ENCODE measurements at regions of chr12 and their contacts with region 1.

Region 1: DNA sequence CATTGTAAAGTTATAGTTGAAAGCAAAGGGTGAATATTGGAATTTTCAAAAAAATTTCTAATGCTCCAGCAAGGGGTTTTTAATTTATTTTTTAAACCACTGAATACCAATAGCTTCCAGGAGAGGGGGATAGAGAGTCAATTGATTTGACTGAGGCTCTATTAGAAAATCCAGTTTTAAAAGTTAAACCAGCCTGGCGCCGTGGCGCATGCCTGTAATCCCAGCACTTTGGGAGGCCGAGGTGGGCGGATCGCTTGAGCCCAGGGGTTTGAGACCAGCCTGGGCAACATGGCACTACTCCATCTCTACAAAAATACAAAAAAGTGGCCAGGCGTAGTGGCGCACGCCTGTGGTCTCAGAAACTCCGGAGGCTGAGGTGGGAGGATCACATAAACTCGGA is 150.1 kb downstream of the SLC38A4 start:
- DNase-seq: peak in 1 of 5 donors; percentile 23
- ATAC-seq: no peak
- H3K4me3 ChIP-seq: peak overlapping the region in 1 of 12 donors; percentile 23
- H3K27ac ChIP-seq: no peak overlapping the region
- H3K4me1 ChIP-seq: peaks cover 0 to 8% (median 0%) of the 10 kb centered on the region in 12 donors
- H3K27me3 ChIP-seq: no peaks in the 10 kb centered on the region
- CTCF ChIP-seq: peak; percentile 58 to 78 (median 68)
- POLR2A ChIP-seq: no peak

Region 2: GRCh38 chr12:46124848-46125619 is 550.7 kb before region 1 on chr12:
- intact Hi-C with region 1: loop called in 2 of 10 experiments (anchors 5 to 10 kb)
- DNase-seq: peak in 3 of 5 donors; percentile 35 to 44 (median 36)
- ATAC-seq: peak; percentile 85 to 92 (median 91)
- H3K4me3 ChIP-seq: peak overlapping the region in 3 of 12 donors; percentile 22 to 38 (median 25)
- H3K27ac ChIP-seq: peak overlapping the region in 1 of 12 donors; percentile 27
- H3K4me1 ChIP-seq: peaks cover 0 to 14% (median 2%) of the 10 kb centered on the region in 12 donors
- H3K27me3 ChIP-seq: peaks cover 0 to 5% (median 0%) of the 10 kb centered on the region in 9 donors
- CTCF ChIP-seq: peak; percentile 23 to 77 (median 60)
- POLR2A ChIP-seq: no peak

Region 3: GRCh38 chr12:46153268-46153872 is 522.4 kb before region 1 on chr12:
- intact Hi-C with region 1: loop called in 2 of 10 experiments (anchors 10 kb)
- DNase-seq: no peak
- ATAC-seq: no peak
- H3K4me3 ChIP-seq: no peak overlapping the region
- H3K27ac ChIP-seq: no peak overlapping the region
- H3K4me1 ChIP-seq: peaks cover 0 to 11% (median 0%) of the 10 kb centered on the region in 12 donors
- H3K27me3 ChIP-seq: no peaks in the 10 kb centered on the region
- CTCF ChIP-seq: peak; percentile 33 to 72 (median 57)
- POLR2A ChIP-seq: no peak

Region 4: GRCh38 chr12:46187023-46187422 is 488.7 kb before region 1 on chr12:
- intact Hi-C with region 1: no loop called
- DNase-seq: peak in 4 of 5 donors; percentile 24 to 40 (median 38)
- ATAC-seq: peak; percentile 32 to 81 (median 77)
- H3K4me3 ChIP-seq: no peak overlapping the region
- H3K27ac ChIP-seq: peak overlapping the region in 1 of 12 donors; percentile 53
- H3K4me1 ChIP-seq: peaks cover 0 to 16% (median 11%) of the 10 kb centered on the region in 12 donors
- H3K27me3 ChIP-seq: no peaks in the 10 kb centered on the region
- CTCF ChIP-seq: no peak
- POLR2A ChIP-seq: no peak

Region 5: GRCh38 chr12:46603781-46604456 is 71.8 kb before region 1 on chr12:
- intact Hi-C with region 1: no loop called
- DNase-seq: no peak
- ATAC-seq: no peak
- H3K4me3 ChIP-seq: no peak overlapping the region
- H3K27ac ChIP-seq: no peak overlapping the region
- H3K4me1 ChIP-seq: peaks cover 0 to 11% (median 1%) of the 10 kb centered on the region in 12 donors
- H3K27me3 ChIP-seq: no peaks in the 10 kb centered on the region
- CTCF ChIP-seq: no peak
- POLR2A ChIP-seq: no peak

Region 6: DNA sequence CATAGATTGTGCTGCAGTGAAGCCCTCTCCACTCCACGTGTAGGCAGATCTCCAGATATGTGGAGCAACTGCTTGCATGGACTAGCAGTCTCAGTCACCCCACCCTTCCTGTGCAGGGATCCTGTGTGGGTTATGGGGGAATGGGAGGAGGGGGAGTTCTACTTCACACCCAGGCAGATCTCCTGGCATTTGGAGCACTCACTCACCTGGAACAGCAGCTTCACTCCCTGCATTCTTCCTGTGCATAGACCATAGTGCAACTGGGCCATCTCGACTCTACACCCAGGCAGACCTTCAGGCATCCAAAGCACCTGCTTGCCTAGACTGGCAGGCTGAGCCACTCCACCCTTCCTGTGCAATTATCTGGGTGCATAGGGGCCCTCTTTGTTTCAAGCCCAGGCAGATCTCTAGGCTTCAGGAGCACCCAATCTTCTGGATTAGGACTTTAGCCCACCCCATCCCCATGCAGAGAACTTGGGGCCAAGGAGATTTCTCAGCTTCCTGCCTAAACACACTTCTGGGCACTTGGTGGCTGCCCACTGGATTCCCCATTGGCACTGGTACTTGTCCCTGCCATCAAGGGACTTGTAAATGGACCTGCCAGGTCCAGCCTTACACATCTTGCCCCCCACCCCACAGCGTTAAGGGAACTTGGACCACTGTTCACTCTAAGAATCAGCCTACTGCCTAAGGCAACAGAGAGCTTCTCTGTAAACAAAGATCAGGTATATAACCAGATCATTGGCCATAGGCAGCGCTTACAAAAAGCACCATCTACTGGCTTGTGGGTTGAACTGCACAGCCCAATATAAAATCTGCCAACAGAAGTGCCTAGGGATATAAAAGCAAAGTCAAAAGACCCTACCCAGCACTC is 307.9 kb after region 1 on chr12:
- intact Hi-C with region 1: loop called in 3 of 10 experiments (anchors 5 to 10 kb)
- DNase-seq: no peak
- ATAC-seq: peak in 3 of 4 donors; percentile 68 to 75 (median 70)
- H3K4me3 ChIP-seq: no peak overlapping the region
- H3K27ac ChIP-seq: no peak overlapping the region
- H3K4me1 ChIP-seq: peaks cover 0 to 3% (median 0%) of the 10 kb centered on the region in 12 donors
- H3K27me3 ChIP-seq: no peaks in the 10 kb centered on the region
- CTCF ChIP-seq: peak; percentile 49 to 78 (median 66)
- POLR2A ChIP-seq: no peak

Region 7: DNA sequence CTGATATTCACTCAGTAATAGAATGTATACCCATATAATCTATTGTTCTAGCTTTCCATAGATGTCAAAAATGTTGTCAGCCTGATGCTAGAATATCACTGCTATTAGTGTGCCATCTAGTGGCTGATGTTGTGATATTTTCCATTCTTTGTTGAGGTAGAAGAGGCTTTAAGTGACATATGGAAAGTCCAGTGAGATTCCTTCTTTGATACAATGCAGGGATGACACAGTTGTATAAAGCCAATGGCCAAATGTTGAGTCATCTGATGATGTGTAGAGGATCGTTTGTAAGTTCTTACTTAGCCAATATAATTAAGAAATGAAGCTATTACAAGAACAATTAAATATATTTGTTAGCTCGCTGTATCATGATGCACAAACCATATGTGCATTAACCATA is 345.6 kb after region 1 on chr12:
- intact Hi-C with region 1: loop called in 3 of 10 experiments (anchors 5 to 10 kb)
- DNase-seq: no peak
- ATAC-seq: peak in 1 of 4 donors; percentile 45
- H3K4me3 ChIP-seq: no peak overlapping the region
- H3K27ac ChIP-seq: no peak overlapping the region
- H3K4me1 ChIP-seq: peaks cover 0 to 7% (median 0%) of the 10 kb centered on the region in 12 donors
- H3K27me3 ChIP-seq: peaks cover 0 to 7% (median 0%) of the 10 kb centered on the region in 9 donors
- CTCF ChIP-seq: peak; percentile 45 to 81 (median 64)
- POLR2A ChIP-seq: no peak

Measured in heart left ventricle (tissue), 16 donors.